Natural killer cell (primary cell): ENCODE measurements at regions of chr15 and their contacts with region 1.

Region 1: GRCh38 chr15:52528991-52529926 is 579 bp upstream of the MYO5A start:
- DNase-seq: peak; percentile 71 to 91
- ATAC-seq: peak; percentile 84 to 90 (median 84)
- H3K4me3 ChIP-seq: peak overlapping the region; percentile 49
- H3K4me3 Mint-ChIP-seq: peak overlapping the region; percentile 78
- H3K27ac ChIP-seq: peak overlapping the region; percentile 81
- H3K27ac Mint-ChIP-seq: peak overlapping the region; percentile 37 to 68
- H3K4me1 ChIP-seq: peaks cover 16% of the 10 kb centered on the region
- H3K4me1 Mint-ChIP-seq: peaks cover 21 to 24% of the 10 kb centered on the region in 2 donors
- H3K27me3 ChIP-seq: no peaks in the 10 kb centered on the region
- H3K27me3 Mint-ChIP-seq: peaks cover 4 to 15% of the 10 kb centered on the region in 2 donors
- CTCF ChIP-seq: no peak

Region 2: DNA sequence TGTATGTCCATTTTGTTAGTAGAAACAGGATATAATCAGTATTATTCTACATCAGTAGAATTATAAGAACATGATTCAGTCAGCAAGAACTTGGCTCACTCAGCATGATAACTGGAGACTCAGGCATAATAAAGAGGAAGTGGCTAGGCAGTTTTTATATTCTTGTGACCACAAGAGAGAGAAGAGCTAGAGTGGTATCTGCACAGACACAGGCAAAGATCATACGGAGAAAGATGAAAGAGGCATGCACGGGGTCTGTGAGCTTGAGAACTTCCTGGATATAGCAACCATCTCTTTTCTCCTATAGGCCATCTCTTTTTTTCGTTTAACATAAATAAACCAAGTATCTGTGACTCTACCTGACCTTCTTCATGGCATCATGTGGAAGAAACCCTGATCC is 47.3 kb before region 1 on chr15:
- intact Hi-C with region 1: loop called (anchors 2 kb)
- DNase-seq: peak in 1 of 2 donors; percentile 88
- ATAC-seq: peak; percentile 90 to 99 (median 94)
- H3K4me3 ChIP-seq: no peak overlapping the region
- H3K4me3 Mint-ChIP-seq: peak overlapping the region; percentile 65
- H3K27ac ChIP-seq: peak overlapping the region; percentile 80
- H3K27ac Mint-ChIP-seq: peak overlapping the region; percentile 78 to 82
- H3K4me1 ChIP-seq: peaks cover 29% of the 10 kb centered on the region
- H3K4me1 Mint-ChIP-seq: peaks cover 60 to 63% of the 10 kb centered on the region in 2 donors
- H3K27me3 ChIP-seq: no peaks in the 10 kb centered on the region
- H3K27me3 Mint-ChIP-seq: no peaks in the 10 kb centered on the region
- CTCF ChIP-seq: no peak

Region 3: DNA sequence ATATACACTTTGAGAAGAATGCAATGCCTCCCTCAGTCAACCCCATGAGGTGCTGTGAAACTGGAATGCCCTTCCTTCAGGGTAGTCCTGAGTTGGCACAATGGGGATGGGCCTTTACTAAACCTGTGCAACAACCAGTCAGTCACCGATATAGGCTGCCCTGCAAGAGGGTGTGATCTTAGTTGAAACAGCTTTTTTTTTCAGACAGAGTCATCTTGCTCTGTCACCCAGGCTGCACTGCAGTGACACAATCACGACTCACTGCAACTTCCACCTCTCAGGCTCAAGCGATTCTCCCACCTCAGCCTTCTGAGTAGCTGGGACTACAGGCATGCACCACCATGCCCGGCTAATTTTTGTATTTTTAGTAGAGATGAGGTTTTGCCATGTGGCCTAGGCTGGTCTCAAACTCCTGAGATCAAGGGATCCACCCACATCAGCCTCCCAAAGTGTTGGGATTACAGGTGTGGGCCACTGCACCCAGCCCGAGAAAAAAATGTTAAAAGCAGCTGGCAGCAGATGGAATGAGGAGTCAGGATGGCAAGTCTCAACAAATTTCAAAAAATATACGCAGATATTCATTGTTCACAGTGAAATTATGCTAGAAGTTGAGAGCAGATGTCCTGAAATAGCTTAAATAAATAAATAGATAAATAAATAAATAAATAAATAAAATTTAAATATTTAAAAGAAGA is 32.3 kb before region 1 on chr15:
- intact Hi-C with region 1: no loop called
- DNase-seq: no peak
- ATAC-seq: peak in 1 of 3 donors; percentile 26
- H3K4me3 ChIP-seq: no peak overlapping the region
- H3K4me3 Mint-ChIP-seq: no peak overlapping the region
- H3K27ac ChIP-seq: no peak overlapping the region
- H3K27ac Mint-ChIP-seq: no peak overlapping the region
- H3K4me1 ChIP-seq: no peaks in the 10 kb centered on the region
- H3K4me1 Mint-ChIP-seq: peaks cover 27 to 33% of the 10 kb centered on the region in 2 donors
- H3K27me3 ChIP-seq: no peaks in the 10 kb centered on the region
- H3K27me3 Mint-ChIP-seq: no peaks in the 10 kb centered on the region
- CTCF ChIP-seq: no peak

Region 4: DNA sequence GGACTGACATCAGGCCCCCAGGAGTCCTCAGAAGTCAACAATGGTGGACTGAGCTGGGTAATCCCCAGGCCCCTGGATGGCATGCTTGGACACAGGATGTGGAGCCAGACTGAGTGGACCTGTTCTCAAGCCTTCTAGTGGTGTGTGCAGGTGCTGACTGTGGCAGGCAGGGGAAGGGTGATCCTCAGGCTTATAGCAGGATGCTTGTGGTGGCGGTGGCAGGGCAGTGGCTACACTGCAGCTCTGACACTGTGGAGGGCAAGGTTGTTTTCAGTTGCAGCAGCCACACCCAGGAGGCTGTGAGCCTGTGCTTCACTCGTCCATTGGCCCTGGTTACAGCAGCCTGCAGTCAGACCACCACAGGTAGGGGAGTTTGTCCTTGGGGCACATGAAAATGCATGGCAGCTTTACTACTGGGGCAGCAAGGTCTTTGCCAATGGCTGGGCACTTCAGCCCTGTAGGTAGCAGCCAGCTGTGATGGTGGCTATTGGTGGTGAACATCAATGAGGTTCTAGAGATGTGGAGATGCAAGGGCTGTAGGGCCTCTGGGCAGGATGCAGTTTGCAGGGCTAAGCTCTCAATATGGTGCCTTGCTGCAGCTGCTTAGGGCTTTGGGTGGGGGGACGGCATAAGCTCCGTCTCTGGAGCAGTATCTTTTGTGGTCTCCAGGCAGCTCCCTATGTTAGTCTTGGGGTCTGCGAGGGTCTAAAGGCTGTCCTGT is 16.9 kb after region 1 on chr15:
- intact Hi-C with region 1: loop called (anchors 1 kb)
- DNase-seq: peak; percentile 21 to 26
- ATAC-seq: peak; percentile 82 to 94 (median 85)
- H3K4me3 ChIP-seq: no peak overlapping the region
- H3K4me3 Mint-ChIP-seq: peak overlapping the region; percentile 69
- H3K27ac ChIP-seq: peak overlapping the region; percentile 43
- H3K27ac Mint-ChIP-seq: peak overlapping the region; percentile 75 to 84
- H3K4me1 ChIP-seq: peaks cover 13% of the 10 kb centered on the region
- H3K4me1 Mint-ChIP-seq: peaks cover 14 to 29% of the 10 kb centered on the region in 2 donors
- H3K27me3 ChIP-seq: no peaks in the 10 kb centered on the region
- H3K27me3 Mint-ChIP-seq: no peaks in the 10 kb centered on the region
- CTCF ChIP-seq: no peak

Region 5: GRCh38 chr15:52568601-52569256 is 39.5 kb after region 1 on chr15 and contains the start of gene ARPP19:
- intact Hi-C with region 1: loop called (anchors 1 kb)
- DNase-seq: peak; percentile 65 to 88
- ATAC-seq: peak; percentile 71 to 79 (median 79)
- H3K4me3 ChIP-seq: peak within 1 kb of the TSS; percentile 42
- H3K4me3 Mint-ChIP-seq: peak within 1 kb of the TSS; percentile 94
- H3K27ac ChIP-seq: peak within 1 kb of the TSS; percentile 85
- H3K27ac Mint-ChIP-seq: peak within 1 kb of the TSS; percentile 90 to 97
- H3K4me1 ChIP-seq: peaks cover 24% of the 10 kb centered on the region
- H3K4me1 Mint-ChIP-seq: peaks cover 32% of the 10 kb centered on the region in 2 donors
- H3K27me3 ChIP-seq: no peaks in the 10 kb centered on the region
- H3K27me3 Mint-ChIP-seq: no peaks in the 10 kb centered on the region
- CTCF ChIP-seq: no peak
- total RNA-seq, gene ARPP19: 110 to 147 (median 121) TPM

Region 6: DNA sequence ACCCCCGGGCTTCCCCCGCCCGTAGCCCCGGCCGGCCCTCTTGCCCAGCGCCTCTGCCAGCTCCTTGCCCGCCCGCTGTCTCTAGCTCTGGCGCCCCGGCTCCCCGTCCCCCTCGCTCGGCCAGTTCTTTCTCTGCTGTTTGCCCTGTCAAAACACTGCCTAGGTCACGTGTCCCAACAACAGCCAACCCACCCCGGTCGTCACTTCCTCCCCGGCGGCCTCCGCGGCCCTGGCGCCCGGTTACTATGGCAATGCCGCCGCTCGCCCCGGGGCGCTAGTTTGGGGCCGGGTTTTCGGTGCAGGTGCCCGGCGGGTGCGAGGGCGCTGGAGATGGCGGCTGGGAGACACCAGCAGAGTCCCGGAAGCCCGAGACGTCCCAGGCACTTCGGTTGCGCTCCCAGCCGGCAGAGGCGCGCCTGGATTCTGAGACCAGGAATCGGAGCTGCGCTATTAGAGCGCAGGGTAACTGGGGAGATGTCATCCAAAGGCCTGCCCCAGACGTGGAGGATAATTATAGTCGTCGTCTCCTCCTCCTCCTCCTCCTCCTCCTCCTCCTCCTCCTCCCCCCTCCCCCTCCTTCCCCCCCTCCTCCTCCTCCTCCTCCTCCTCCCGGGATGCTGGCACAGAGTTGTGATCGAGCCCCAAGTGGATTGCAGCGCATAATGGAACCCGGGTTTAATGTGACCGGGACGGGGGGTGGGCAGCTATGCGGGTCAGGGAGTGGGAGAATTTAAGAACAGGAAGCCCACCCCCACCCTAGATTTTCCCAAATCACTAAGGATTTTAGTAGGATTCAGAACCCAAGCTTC is 150.2 kb after region 1 on chr15 and contains the start of gene ATOSA:
- intact Hi-C with region 1: loop called (anchors 2 kb)
- DNase-seq: peak; percentile 89 to 95
- ATAC-seq: peak; percentile 69 to 90 (median 86)
- H3K4me3 ChIP-seq: peak within 1 kb of the TSS; percentile 93
- H3K4me3 Mint-ChIP-seq: peak within 1 kb of the TSS; percentile 99
- H3K27ac ChIP-seq: peak within 1 kb of the TSS; percentile 98
- H3K27ac Mint-ChIP-seq: peak within 1 kb of the TSS; percentile 97
- H3K4me1 ChIP-seq: peaks cover 17% of the 10 kb centered on the region
- H3K4me1 Mint-ChIP-seq: peaks cover 44 to 56% of the 10 kb centered on the region in 2 donors
- H3K27me3 ChIP-seq: no peaks in the 10 kb centered on the region
- H3K27me3 Mint-ChIP-seq: no peaks in the 10 kb centered on the region
- CTCF ChIP-seq: no peak
- total RNA-seq, gene ATOSA: 107 to 127 (median 114) TPM

Region 7: GRCh38 chr15:52735231-52736089 is 206.2 kb after region 1 on chr15:
- intact Hi-C with region 1: loop called (anchors 10 kb)
- DNase-seq: peak; percentile 24 to 89
- ATAC-seq: peak; percentile 83 to 85 (median 84)
- H3K4me3 ChIP-seq: no peak overlapping the region
- H3K4me3 Mint-ChIP-seq: no peak overlapping the region
- H3K27ac ChIP-seq: no peak overlapping the region
- H3K27ac Mint-ChIP-seq: no peak overlapping the region
- H3K4me1 ChIP-seq: no peaks in the 10 kb centered on the region
- H3K4me1 Mint-ChIP-seq: peaks cover under 1% of the 10 kb centered on the region in 2 donors
- H3K27me3 ChIP-seq: no peaks in the 10 kb centered on the region
- H3K27me3 Mint-ChIP-seq: peaks cover 0 to 12% of the 10 kb centered on the region in 2 donors
- CTCF ChIP-seq: peak; percentile 97